ENCODE measurements at regions of chr6 and their contacts with region 1.

Region 1: GRCh38 chr6:90425161-90425641 is 128.6 kb upstream of the BACH2 start:
- DNase-seq: peak; percentile 52
- H3K4me3 Mint-ChIP-seq: peak overlapping the region; percentile 59
- H3K27ac Mint-ChIP-seq: peak overlapping the region; percentile 95
- H3K4me1 Mint-ChIP-seq: peaks cover 38% of the 10 kb centered on the region
- H3K27me3 Mint-ChIP-seq: no peaks in the 10 kb centered on the region

Region 2: DNA sequence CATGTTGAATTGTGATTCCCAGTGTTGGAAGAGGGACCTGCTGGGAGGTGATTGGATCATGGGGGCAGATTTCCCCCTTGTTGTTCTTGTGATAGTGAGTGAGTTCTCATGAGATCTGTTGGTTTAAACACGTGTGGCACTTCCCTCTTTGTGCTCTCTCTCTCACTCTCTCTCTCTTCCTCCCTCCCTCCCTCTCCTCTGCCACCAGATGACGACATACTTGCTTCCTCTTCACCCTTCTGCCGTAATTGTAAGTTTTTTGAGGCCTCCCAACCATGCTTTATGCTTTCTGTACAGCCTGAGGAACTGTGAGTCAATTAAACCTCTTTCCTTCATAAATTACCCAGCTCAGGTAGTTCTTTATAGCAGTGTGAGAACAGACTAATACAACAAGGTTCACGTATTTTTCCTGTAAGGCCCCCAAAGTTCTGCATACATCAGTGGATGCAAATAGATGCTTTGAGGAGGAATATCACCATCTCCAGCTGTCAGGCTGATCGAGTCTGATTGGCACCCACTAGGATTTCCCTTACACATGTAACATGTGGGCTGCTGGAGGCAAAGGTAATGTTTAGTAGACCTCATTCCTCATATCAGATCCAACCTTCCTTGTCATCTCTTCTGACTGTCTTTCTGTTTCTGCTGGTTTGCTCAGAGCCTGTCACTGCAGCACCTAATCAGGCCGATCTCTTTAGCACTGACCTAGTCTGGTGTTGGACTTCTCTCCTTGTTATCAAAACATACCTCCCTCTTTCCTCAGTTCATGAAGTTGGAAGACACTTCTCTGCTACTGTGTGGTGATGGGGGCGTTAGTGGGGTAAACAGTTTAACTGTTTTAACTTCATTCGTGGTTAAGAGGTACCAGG is 74.3 kb before region 1 on chr6:
- CTCF ChIA-PET with region 1: no interaction called
- POLR2A ChIA-PET with region 1: no interaction called
- intact Hi-C with region 1: loop called (anchors 2 kb)
- DNase-seq: peak; percentile 67
- H3K4me3 Mint-ChIP-seq: peak overlapping the region; percentile 31
- H3K27ac Mint-ChIP-seq: peak overlapping the region; percentile 85
- H3K4me1 Mint-ChIP-seq: peaks cover 44% of the 10 kb centered on the region
- H3K27me3 Mint-ChIP-seq: peaks cover under 1% of the 10 kb centered on the region

Region 3: DNA sequence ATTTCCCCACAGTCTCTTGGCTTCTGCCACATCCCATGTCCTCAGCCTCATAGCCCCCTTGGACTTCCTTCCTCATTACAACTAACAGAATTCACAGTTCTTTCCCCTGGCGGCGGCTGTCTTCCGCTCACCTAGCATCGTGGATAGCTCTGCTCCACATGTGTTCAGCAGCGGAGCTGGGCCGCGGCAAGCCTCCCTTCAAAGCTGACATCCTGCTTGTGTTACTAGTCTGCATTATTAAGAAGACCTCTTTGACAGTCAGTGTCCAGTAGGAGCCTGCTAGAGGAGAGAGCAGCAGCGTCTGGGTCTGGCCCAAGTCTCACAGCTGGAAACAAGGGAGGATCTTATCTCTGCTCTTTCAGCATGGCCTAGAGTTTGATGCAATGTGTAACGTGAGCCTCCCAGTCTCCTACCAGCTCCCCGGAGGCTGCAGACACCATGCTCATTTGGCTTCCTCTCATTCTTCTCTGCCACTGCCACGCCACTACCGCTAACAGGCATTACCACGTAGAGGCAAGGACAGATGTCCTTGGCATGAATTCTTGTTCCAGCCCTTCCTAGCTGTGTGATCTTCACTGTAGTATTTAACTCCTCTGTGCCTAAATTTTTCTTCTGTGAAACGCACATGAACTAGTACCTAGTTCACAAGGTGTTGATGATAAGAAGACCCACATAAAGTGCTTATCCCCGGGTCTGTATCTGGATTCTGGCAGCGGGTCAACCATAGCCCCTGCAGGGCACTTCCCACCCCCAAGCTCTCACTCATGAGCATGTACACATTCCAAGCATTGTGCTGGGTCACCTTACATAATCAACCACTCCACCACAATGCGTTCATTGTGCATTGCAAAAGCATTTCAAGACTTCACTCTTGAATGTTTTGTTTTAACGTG is 21.5 kb before region 1 on chr6:
- CTCF ChIA-PET with region 1: interaction called, 9 read pairs
- POLR2A ChIA-PET with region 1: interaction called, 56 read pairs
- intact Hi-C with region 1: loop called (anchors 1 kb)
- DNase-seq: no peak
- H3K4me3 Mint-ChIP-seq: peak overlapping the region; percentile 64
- H3K27ac Mint-ChIP-seq: peak overlapping the region; percentile 93
- H3K4me1 Mint-ChIP-seq: peaks cover 81% of the 10 kb centered on the region
- H3K27me3 Mint-ChIP-seq: no peaks in the 10 kb centered on the region

Region 4: GRCh38 chr6:90444160-90444714 is 19.0 kb after region 1 on chr6:
- CTCF ChIA-PET with region 1: interaction called, 3 read pairs
- POLR2A ChIA-PET with region 1: interaction called, 4 read pairs
- intact Hi-C with region 1: loop called (anchors 1 kb)
- DNase-seq: no peak
- H3K4me3 Mint-ChIP-seq: peak overlapping the region; percentile 48
- H3K27ac Mint-ChIP-seq: peak overlapping the region; percentile 92
- H3K4me1 Mint-ChIP-seq: peaks cover 47% of the 10 kb centered on the region
- H3K27me3 Mint-ChIP-seq: no peaks in the 10 kb centered on the region

Region 5: DNA sequence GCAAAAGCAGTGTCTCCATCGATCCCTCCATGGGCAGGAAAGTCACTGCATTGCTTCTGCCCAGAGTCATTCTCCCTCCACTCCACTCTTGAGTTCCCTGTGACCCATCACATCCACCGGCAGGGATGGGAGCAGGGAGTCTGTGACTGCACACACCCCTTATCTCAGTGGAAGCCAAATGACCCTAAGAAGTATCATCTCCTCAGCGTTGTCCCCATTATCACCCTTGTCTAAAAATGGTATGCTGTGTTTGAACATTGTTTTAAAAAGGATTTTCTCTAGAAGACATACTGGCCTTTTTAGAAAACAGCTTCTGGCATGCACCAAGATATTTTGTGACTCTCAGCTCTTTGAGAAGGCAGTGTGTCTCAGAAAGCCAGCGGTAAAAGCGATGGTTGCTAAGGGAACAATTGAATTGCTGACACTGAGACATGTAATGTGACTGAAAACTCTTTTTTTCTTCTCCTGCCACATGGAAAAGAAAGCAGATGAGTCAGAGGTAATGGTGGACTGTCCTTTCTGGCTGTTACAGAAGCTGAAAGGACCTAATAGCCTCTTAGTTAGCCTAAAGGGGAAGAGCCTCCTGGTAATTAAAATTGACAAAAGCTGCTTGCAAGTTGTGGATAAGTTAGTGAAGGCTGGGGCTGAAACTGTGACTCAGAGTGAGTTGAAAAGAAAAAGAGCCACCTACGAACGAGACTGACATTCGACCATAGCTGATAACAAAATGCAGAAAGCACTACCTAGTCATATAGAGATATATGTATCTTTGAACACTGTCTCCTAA is 41.1 kb after region 1 on chr6:
- CTCF ChIA-PET with region 1: interaction called, 6 read pairs
- POLR2A ChIA-PET with region 1: interaction called, 8 read pairs
- intact Hi-C with region 1: loop called (anchors 2 kb)
- DNase-seq: peak; percentile 60
- H3K4me3 Mint-ChIP-seq: peak overlapping the region; percentile 27
- H3K27ac Mint-ChIP-seq: peak overlapping the region; percentile 96
- H3K4me1 Mint-ChIP-seq: peaks cover 84% of the 10 kb centered on the region
- H3K27me3 Mint-ChIP-seq: peaks cover 1% of the 10 kb centered on the region

Measured in activated CD4-positive, alpha-beta memory T cell treated with anti-CD3 and anti-CD28 coated beads for 36 hours (primary cell).